Calu3 (cell line): ENCODE measurements at regions of chr1 and their contacts with region 1.

Region 1: GRCh38 chr1:58000116-58000515 is 546.4 kb downstream of the OMA1 start:
- DNase-seq: no peak
- H3K4me3 Mint-ChIP-seq: no peak overlapping the region
- H3K27ac Mint-ChIP-seq: no peak overlapping the region
- H3K4me1 Mint-ChIP-seq: no peaks in the 10 kb centered on the region
- H3K27me3 Mint-ChIP-seq: peaks cover 54% of the 10 kb centered on the region
- CTCF ChIP-seq: no peak

Region 2: GRCh38 chr1:57468641-57469523 is 531.2 kb before region 1 on chr1:
- CTCF ChIA-PET with region 1: interaction called, 14 read pairs
- intact Hi-C with region 1: no loop called
- DNase-seq: no peak
- H3K4me3 Mint-ChIP-seq: no peak overlapping the region
- H3K27ac Mint-ChIP-seq: no peak overlapping the region
- H3K4me1 Mint-ChIP-seq: no peaks in the 10 kb centered on the region
- H3K27me3 Mint-ChIP-seq: no peaks in the 10 kb centered on the region
- CTCF ChIP-seq: no peak